Ascending aorta (tissue), 2 donors: ENCODE measurements at regions of chr5 and their contacts with region 1.

Region 1: GRCh38 chr5:149960272-149961185 is at the start of gene SLC26A2:
- DNase-seq: peak; percentile 95 to 99
- H3K4me3 ChIP-seq: peak within 1 kb of the TSS; percentile 77 to 86
- H3K27ac ChIP-seq: peak within 1 kb of the TSS; percentile 88 to 94
- H3K4me1 ChIP-seq: peaks cover 0 to 12% of the 10 kb centered on the region in 2 donors
- H3K27me3 ChIP-seq: no peaks in the 10 kb centered on the region
- CTCF ChIP-seq: no peak
- total RNA-seq, gene SLC26A2: 6.9 TPM

Region 2: GRCh38 chr5:149834246-149834855 is 126.2 kb before region 1 on chr5:
- intact Hi-C with region 1: loop called (anchors 1 kb)
- DNase-seq: peak in 1 of 2 donors; percentile 79
- H3K4me3 ChIP-seq: no peak overlapping the region
- H3K27ac ChIP-seq: no peak overlapping the region
- H3K4me1 ChIP-seq: no peaks in the 10 kb centered on the region
- H3K27me3 ChIP-seq: no peaks in the 10 kb centered on the region
- CTCF ChIP-seq: peak; percentile 61 to 74 (median 73)

Region 3: GRCh38 chr5:149895416-149896345 is 64.8 kb before region 1 on chr5:
- intact Hi-C with region 1: loop called (anchors 10 kb)
- DNase-seq: no peak
- H3K4me3 ChIP-seq: no peak overlapping the region
- H3K27ac ChIP-seq: peak overlapping the region in 1 of 2 donors; percentile 20
- H3K4me1 ChIP-seq: no peaks in the 10 kb centered on the region
- H3K27me3 ChIP-seq: no peaks in the 10 kb centered on the region
- CTCF ChIP-seq: no peak

Region 4: DNA sequence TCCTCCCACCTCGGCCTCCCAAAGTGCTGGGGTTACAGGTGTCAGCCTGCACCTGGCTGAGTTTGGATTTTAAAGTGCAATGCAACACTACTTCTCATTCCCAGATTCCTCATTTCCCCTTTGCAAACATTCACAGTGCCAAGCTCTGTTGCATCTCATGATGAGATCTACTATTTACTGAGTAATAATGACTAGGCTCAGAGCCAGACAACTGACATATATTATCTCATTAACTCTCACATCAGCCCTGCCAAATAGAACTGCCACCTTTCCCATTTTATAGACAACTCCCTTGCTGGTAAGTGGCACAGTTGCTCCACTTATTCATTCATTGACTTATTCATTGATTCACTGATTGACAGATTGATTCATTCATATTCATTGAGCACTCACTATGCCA is 22.9 kb before region 1 on chr5:
- intact Hi-C with region 1: loop called (anchors 2 kb)
- DNase-seq: no peak
- H3K4me3 ChIP-seq: no peak overlapping the region
- H3K27ac ChIP-seq: peak overlapping the region; percentile 62 to 82
- H3K4me1 ChIP-seq: peaks cover 5 to 40% of the 10 kb centered on the region in 2 donors
- H3K27me3 ChIP-seq: no peaks in the 10 kb centered on the region
- CTCF ChIP-seq: no peak

Region 5: GRCh38 chr5:150000256-150000989 is 39.9 kb after region 1 on chr5 and contains the starts of genes HMGXB3 and TIGD6:
- intact Hi-C with region 1: loop called (anchors 2 kb)
- DNase-seq: peak; percentile 73 to 95
- H3K4me3 ChIP-seq: peak within 1 kb of the TSS; percentile 79 to 98
- H3K27ac ChIP-seq: peak within 1 kb of the TSS; percentile 93 to 95
- H3K4me1 ChIP-seq: peaks cover 8 to 24% of the 10 kb centered on the region in 2 donors
- H3K27me3 ChIP-seq: no peaks in the 10 kb centered on the region
- CTCF ChIP-seq: no peak
- total RNA-seq, gene HMGXB3: 56.4 TPM
- total RNA-seq, gene TIGD6: 4.2 TPM